Sigmoid colon (tissue), 7 donors: ENCODE measurements at regions of chr22 and their contacts with region 1.

Region 1: DNA sequence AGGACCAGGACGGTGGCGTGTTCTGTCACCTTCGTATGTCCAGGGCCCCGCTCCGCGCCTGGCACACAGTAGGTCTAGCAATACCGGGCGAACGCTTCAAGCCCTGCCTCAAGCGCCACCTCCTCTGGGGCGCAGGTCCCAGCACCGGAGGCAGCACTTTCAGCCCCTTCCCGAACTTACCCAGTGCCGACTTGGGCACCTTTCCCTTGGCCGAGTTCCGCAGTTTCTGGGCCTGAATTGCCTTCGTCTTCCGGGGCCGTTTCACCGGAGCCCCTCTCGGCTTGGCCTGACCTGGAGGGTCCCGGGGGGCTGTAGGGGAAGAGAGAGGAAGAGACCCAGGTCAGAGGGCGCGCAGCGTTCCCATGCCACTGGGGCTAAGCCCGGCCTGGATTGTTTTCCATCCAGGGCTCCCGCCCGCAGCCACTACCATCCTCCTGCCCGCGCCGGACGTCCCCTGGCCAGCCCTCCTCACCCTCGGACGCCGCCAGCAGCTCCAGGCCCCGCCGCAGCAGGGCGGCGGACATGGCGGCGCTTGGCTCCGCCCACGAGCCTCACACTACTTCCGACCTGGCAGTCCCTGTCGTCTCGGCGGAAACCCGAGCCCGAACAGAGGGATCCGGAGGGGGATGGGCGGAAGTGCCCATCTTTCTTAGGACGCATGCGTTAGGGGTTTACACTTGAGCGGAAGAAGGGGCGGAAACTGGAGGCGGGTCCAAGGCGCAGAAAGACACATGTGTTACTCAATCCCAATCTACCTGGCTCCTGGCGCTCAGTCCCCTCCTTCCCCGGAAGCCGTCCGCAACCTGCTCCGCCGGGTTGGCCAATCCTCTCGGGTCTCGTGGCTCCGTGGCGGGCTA is at the start of gene RPS19BP1:
- DNase-seq: peak; percentile 100
- H3K4me3 ChIP-seq: peak within 1 kb of the TSS; percentile 60 to 98 (median 78)
- H3K27ac ChIP-seq: peak within 1 kb of the TSS; percentile 85 to 99 (median 88)
- H3K4me1 ChIP-seq: peaks cover 3 to 60% (median 57%) of the 10 kb centered on the region in 4 donors
- H3K27me3 ChIP-seq: no peaks in the 10 kb centered on the region
- CTCF ChIP-seq: no peak
- EP300 ChIP-seq: peak in 1 of 4 donors; percentile 76
- POLR2A ChIP-seq: peak; percentile 84 to 89
- total RNA-seq, gene RPS19BP1: 148 to 217 (median 189) TPM

Region 2: DNA sequence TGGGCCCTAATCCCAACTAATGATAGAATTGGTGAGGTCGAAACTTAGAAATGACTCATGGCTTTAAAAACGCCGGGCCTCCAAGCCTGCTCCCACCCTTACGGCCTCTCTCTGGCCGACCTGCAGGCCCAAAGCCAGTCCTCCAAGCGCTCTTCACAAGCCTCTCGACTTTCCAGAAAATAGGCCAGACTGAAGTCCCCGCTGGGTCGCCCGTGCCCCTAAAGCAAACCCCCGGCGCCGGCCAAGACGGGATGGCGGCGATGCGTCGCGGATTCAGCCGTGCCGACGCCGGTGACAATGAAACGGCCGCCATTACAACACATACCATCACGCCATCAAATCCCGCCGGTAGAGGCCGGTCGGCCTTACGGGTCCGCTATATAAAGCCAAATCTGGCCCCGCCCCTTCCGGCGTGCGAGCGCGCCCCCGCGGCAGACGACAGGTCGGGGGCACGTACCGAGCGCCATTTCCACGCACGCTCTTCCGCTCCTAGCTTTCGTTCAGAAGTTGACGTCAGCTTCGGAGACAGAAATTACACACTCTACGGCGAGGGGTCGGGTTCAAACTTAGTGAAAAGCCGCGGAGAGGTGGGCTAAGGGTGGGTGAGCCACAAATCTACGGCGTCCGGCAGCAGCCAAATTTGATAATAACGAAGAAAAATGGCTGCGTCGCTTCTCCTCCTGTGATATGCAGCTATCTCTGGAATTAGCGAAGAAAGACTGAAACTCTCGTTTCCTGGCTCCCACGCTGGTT is 213.0 kb before region 1 on chr22 and contains the start of gene RPL3:
- intact Hi-C with region 1: loop called (anchors 5 kb)
- DNase-seq: peak; percentile 98
- H3K4me3 ChIP-seq: peak within 1 kb of the TSS; percentile 61 to 83 (median 76)
- H3K27ac ChIP-seq: peak within 1 kb of the TSS; percentile 92 to 99 (median 96)
- H3K4me1 ChIP-seq: peaks cover 0 to 49% (median 43%) of the 10 kb centered on the region in 4 donors
- H3K27me3 ChIP-seq: no peaks in the 10 kb centered on the region
- CTCF ChIP-seq: peak in 1 of 4 experiments; percentile 13
- EP300 ChIP-seq: peak in 2 of 4 donors; percentile 62 to 93
- POLR2A ChIP-seq: peak; percentile 87 to 91
- total RNA-seq, gene RPL3: 1,532 to 2,212 (median 2,076) TPM

Region 3: DNA sequence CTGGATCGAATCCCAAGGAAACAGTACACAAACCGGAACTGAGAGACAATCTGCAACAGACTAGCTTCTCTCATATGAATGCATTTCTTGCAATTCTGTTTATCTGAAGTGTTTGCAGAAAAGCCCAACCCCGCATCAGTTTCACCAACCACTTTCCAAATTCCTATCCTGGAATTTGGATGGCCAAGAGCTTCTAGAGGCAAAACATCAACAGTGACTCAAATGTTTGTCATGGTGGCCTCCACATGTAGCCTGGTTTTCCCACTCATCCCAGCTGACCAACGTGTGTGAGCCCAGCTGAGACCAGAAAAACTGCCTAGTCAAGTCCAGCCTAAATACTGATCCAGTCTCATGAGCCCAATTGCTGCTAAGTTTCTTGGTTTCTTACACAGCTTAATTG is 38.7 kb before region 1 on chr22:
- intact Hi-C with region 1: loop called (anchors 2 kb)
- DNase-seq: no peak
- H3K4me3 ChIP-seq: no peak overlapping the region
- H3K27ac ChIP-seq: no peak overlapping the region
- H3K4me1 ChIP-seq: peaks cover 0 to 9% (median 0%) of the 10 kb centered on the region in 4 donors
- H3K27me3 ChIP-seq: no peaks in the 10 kb centered on the region
- CTCF ChIP-seq: no peak
- EP300 ChIP-seq: no peak
- POLR2A ChIP-seq: no peak

Region 4: GRCh38 chr22:40044102-40044869 is 511.8 kb after region 1 on chr22:
- intact Hi-C with region 1: loop called (anchors 5 kb)
- DNase-seq: peak; percentile 99
- H3K4me3 ChIP-seq: peak overlapping the region; percentile 82 to 89 (median 88)
- H3K27ac ChIP-seq: peak overlapping the region; percentile 92 to 96 (median 94)
- H3K4me1 ChIP-seq: peaks cover 0 to 34% (median 26%) of the 10 kb centered on the region in 4 donors
- H3K27me3 ChIP-seq: peaks cover 0 to 9% (median under 1%) of the 10 kb centered on the region in 3 donors
- CTCF ChIP-seq: no peak
- EP300 ChIP-seq: no peak
- POLR2A ChIP-seq: peak; percentile 53 to 63

Region 5: GRCh38 chr22:40107851-40108378 is 575.5 kb after region 1 on chr22:
- intact Hi-C with region 1: no loop called
- DNase-seq: no peak
- H3K4me3 ChIP-seq: peak overlapping the region in 3 of 4 donors; percentile 25 to 38 (median 37)
- H3K27ac ChIP-seq: peak overlapping the region; percentile 53 to 85 (median 71)
- H3K4me1 ChIP-seq: peaks cover 0 to 42% (median 18%) of the 10 kb centered on the region in 4 donors
- H3K27me3 ChIP-seq: no peaks in the 10 kb centered on the region
- CTCF ChIP-seq: no peak
- EP300 ChIP-seq: no peak
- POLR2A ChIP-seq: no peak

Region 6: DNA sequence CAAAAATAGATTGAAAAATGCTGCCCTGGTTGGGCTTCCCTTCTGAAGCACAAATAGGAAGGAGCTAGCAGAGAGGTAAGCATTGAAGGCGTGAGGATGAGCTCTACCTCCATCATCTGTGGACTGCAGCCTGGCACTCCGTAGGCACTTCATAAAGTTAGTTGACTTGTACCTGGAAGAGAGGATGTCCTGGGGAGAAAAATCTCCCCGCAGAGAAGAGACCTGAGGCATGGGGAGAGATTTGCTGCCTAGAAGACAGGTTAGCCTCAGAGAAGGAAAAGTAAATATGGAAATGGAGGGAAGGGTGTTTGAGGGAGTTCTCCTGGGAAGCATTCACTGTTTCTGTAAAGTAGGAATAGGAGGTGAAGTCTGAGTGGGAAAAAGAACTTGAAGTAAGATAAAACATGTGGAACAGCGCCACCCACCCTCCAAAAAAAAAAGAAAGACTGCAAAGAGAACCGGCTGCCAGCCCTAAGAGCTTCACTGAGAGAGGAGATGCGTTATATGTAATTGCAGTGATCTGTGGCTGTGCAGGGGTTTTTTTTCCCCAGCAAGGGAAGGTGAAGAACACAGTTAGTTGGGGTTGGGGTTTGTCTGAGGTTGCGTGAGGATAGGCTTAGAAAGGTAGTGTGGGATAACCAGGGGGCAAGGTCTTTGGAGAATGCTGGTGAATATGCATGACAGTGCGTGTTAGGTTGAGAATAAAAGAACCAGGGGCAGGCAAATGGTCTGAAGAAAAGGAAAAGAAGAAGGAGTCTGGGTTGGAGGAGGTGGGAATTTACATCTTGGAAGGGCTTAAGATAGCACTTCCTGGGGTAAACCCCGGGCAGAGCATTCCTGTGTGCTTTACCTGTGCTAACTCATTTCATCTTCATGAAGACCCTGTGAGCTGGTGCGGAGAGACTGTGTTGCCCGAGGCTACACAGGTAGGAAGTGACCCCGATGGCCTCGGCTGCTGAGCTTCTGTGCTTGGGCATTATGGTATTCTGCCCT is 661.3 kb after region 1 on chr22:
- intact Hi-C with region 1: loop called (anchors 5 kb)
- DNase-seq: no peak
- H3K4me3 ChIP-seq: no peak overlapping the region
- H3K27ac ChIP-seq: peak overlapping the region; percentile 32 to 89 (median 58)
- H3K4me1 ChIP-seq: peaks cover 0 to 100% (median 85%) of the 10 kb centered on the region in 4 donors
- H3K27me3 ChIP-seq: no peaks in the 10 kb centered on the region
- CTCF ChIP-seq: peak in 3 of 4 experiments; percentile 16 to 20 (median 17)
- EP300 ChIP-seq: no peak
- POLR2A ChIP-seq: no peak